Activated B cell treated with CpG ODN at 0.5 μM for 24 hours (primary cell): ENCODE measurements at regions of chr16 and their contacts with region 1.

Region 1: DNA sequence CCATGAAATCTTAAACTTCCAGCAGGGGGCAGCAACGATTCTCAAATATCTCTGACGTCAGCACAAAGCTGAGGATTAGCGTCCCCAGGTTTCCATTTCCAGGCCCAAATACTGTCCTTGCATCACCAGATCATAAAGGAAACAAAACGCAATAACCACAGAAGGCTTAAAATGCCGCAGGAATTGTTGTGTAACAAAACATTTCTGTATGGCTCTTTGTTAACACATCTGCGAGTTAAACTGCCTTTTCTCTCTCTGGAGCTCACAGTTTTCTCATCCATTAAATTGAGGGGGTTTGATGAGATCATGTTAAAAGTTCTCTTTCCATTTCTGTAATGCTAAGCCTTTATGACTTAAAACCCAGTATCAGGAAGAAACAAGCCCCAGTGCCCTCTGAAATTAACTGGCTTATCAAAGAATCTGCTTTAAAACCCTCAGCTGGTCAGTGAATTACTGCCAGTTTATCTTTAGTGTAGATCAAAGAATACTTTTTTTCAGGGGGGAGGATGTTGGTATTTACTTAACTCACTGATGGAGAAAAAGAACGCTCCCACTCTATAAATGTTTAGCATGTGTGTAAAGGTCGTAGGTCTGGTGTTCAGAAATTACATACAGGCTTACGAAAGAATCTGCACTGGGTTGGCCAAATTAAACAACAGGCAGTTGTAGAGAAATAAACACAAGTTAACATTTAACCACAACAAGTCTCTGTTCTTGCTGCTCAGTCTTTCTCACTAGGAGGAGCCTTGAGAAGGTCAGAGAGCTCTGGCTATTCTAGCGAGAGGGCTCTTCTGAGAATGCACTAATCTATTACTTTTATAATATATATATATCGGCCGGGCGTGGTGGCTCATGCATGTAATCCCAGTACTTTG is 10.6 kb upstream of the TERF2 start:
- DNase-seq: no peak
- ATAC-seq: peak; percentile 56
- H3K4me3 Mint-ChIP-seq: no peak overlapping the region
- H3K27ac Mint-ChIP-seq: no peak overlapping the region
- H3K4me1 Mint-ChIP-seq: peaks cover 10% of the 10 kb centered on the region
- H3K27me3 Mint-ChIP-seq: no peaks in the 10 kb centered on the region
- CTCF ChIP-seq: no peak

Region 2: DNA sequence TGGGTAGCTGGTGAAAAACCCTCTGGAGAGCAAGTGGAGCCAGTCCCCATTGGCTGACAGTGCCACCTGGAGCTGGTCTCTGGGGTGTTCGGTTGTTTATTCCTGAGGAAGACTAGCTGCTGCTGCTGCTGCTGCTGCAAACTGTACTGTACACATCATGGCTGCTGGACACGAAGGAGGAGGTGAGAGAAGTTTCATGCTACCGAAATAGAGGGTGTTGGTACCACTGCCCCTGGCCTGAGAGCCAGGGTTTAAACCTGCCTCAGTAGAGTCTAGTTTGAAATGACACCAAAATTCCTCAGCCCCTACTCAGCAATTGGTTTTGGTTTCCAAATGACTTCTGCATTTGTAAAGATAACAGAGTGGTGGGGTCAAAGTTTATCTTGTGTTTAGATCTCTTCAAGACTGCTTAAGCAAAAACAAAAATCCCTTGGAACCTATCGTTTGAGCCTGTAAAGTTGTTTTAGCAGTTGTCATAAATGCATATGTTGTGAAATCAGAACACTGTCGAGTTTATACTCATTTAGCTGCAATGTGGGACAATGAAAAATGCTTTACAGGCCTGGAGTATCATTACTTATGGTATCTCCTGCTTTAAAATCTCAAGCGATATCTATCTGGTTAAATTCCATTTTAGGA is 68.8 kb after region 1 on chr16:
- CTCF ChIA-PET with region 1: interaction called, 3 read pairs
- POLR2A ChIA-PET with region 1: interaction called, 5 read pairs
- intact Hi-C with region 1: loop called (anchors 5 kb)
- DNase-seq: no peak
- ATAC-seq: no peak
- H3K4me3 Mint-ChIP-seq: peak overlapping the region; percentile 1
- H3K27ac Mint-ChIP-seq: peak overlapping the region; percentile 69
- H3K4me1 Mint-ChIP-seq: peaks cover 36% of the 10 kb centered on the region
- H3K27me3 Mint-ChIP-seq: no peaks in the 10 kb centered on the region
- CTCF ChIP-seq: no peak

Region 3: DNA sequence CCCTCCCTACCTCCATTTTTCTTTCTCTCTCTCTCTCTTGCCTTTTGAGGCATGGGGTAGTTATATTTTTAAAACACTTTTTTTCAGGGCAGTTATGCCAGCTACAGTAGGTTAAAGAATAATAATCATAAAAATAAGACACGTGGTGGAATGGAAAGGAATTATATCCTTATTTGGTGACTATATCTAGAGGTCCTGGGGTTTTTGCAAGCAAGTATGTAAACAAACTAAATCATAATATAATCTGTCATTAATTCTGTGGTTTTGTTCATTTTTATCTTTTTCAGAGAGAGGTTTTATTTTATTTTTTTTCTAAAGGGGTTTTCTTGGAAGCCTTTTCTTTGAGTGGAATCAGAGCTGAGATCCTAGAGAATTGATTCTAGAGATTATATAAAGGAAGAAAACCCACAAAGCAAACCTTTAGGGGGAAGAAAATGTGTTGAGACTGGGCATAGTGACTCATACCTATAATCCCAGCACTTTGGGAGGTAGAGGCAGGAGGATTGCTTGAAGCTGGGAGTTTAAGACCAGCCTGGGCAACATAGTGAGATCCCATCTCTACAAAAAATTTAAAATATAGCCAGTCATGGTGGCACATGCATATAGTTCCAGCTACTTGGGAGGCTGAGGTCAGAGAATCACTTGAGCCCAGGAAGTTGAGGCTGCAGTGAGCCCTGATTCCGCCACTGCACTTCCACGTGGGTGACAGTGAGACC is 276.7 kb after region 1 on chr16:
- CTCF ChIA-PET with region 1: interaction called, 15 read pairs
- POLR2A ChIA-PET with region 1: no interaction called
- intact Hi-C with region 1: no loop called
- DNase-seq: no peak
- ATAC-seq: no peak
- H3K4me3 Mint-ChIP-seq: no peak overlapping the region
- H3K27ac Mint-ChIP-seq: no peak overlapping the region
- H3K4me1 Mint-ChIP-seq: no peaks in the 10 kb centered on the region
- H3K27me3 Mint-ChIP-seq: no peaks in the 10 kb centered on the region
- CTCF ChIP-seq: no peak

Region 4: DNA sequence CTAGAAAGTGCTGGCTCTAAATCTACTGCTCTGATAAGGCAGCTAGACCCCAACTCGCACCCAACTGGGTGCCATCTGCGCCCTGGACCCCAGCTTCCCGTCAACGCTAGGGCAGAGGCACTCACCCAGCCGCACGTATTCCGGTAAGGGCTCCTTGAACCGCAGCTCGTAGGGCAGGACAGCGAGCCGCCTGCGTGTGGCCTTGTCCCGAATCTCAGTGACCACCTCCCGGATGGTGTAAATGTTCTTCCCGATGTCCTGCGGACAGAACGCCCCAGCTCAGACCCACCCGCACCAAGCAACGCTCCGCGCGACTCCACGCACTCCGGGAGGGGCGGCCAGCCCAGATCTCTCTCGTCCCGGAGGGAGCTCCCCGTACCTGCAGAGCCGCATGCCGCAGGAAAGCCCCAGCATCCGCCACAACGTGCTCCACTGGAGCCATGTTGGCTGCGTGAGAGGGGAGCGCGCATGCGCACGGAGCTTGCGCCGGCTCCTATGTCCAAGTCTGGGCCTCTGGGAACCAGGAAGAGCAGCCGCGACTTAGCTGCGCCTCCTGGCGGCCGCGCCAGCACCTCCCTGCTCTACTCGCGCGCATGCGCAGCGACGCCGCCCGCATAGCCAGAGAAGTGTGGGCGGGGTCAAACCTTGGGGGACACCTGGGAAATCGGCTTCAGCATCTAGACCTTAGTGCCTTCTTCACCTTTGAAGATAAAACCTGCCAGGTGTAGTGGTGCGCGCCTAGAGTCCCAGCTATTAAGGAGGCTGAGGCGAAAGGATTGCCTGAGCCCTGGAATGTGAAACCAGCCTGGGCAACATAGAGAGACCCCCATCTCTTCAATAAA is 358.3 kb after region 1 on chr16 and contains the start of gene NOB1:
- CTCF ChIA-PET with region 1: interaction called, 23 read pairs
- POLR2A ChIA-PET with region 1: interaction called, 11 read pairs
- intact Hi-C with region 1: loop called (anchors 1 kb)
- DNase-seq: peak; percentile 94
- ATAC-seq: peak; percentile 96
- H3K4me3 Mint-ChIP-seq: peak within 1 kb of the TSS; percentile 100
- H3K27ac Mint-ChIP-seq: peak within 1 kb of the TSS; percentile 99
- H3K4me1 Mint-ChIP-seq: peaks cover 26% of the 10 kb centered on the region
- H3K27me3 Mint-ChIP-seq: peaks cover 3% of the 10 kb centered on the region
- CTCF ChIP-seq: peak; percentile 89
- total RNA-seq, gene NOB1: 76.1 and 78.8 TPM in 2 replicates